ENCODE measurements at regions of chr1 and their contacts with region 1.

Region 1: GRCh38 chr1:222465211-222466041 is 82.5 kb downstream of the HHIPL2 start:
- DNase-seq: peak in 1 of 2 donors; percentile 94
- H3K4me3 ChIP-seq: peak overlapping the region; percentile 41 to 62
- H3K27ac ChIP-seq: peak overlapping the region; percentile 77
- H3K4me1 ChIP-seq: peaks cover 8% of the 10 kb centered on the region
- H3K27me3 ChIP-seq: no peaks in the 10 kb centered on the region
- CTCF ChIP-seq: peak; percentile 96 to 100 (median 99)
- POLR2A ChIP-seq: no peak

Region 2: GRCh38 chr1:222634180-222635013 is 169.0 kb after region 1 on chr1:
- intact Hi-C with region 1: loop called (anchors 5 kb)
- DNase-seq: no peak
- H3K4me3 ChIP-seq: no peak overlapping the region
- H3K27ac ChIP-seq: peak overlapping the region; percentile 37
- H3K4me1 ChIP-seq: no peaks in the 10 kb centered on the region
- H3K27me3 ChIP-seq: no peaks in the 10 kb centered on the region
- CTCF ChIP-seq: peak; percentile 31 to 83 (median 70)
- POLR2A ChIP-seq: no peak

Measured in vagina (tissue), 2 donors.